ENCODE measurements at regions of chr3 and their contacts with region 1.

Region 1: GRCh38 chr3:42502429-42503250 is at the start of gene VIPR1:
- DNase-seq: peak; percentile 90 to 97 (median 92)
- ATAC-seq: peak; percentile 97
- H3K4me3 ChIP-seq: peak within 1 kb of the TSS; percentile 59 to 95
- H3K4me3 Mint-ChIP-seq: peak within 1 kb of the TSS; percentile 95
- H3K27ac ChIP-seq: peak within 1 kb of the TSS; percentile 12 to 62
- H3K27ac Mint-ChIP-seq: peak within 1 kb of the TSS; percentile 91
- H3K4me1 ChIP-seq: peaks cover 52% of the 10 kb centered on the region
- H3K4me1 Mint-ChIP-seq: peaks cover 49% of the 10 kb centered on the region
- H3K27me3 ChIP-seq: peaks cover 3 to 7% of the 10 kb centered on the region in 2 experiments
- H3K27me3 Mint-ChIP-seq: peaks cover 16% of the 10 kb centered on the region
- CTCF ChIP-seq: no peak
- total RNA-seq, gene VIPR1: 31.2 to 34.3 TPM

Region 2: GRCh38 chr3:41961750-41962679 is 540.6 kb before region 1 on chr3 and contains the start of gene ULK4:
- CTCF ChIA-PET with region 1: no interaction called
- POLR2A ChIA-PET with region 1: interaction called, 3 read pairs
- intact Hi-C with region 1: loop called (anchors 2 to 5 kb)
- DNase-seq: peak; percentile 89 to 99 (median 95)
- ATAC-seq: peak; percentile 84
- H3K4me3 ChIP-seq: peak within 1 kb of the TSS; percentile 84 to 99
- H3K4me3 Mint-ChIP-seq: peak within 1 kb of the TSS; percentile 100
- H3K27ac ChIP-seq: peak within 1 kb of the TSS; percentile 85 to 96
- H3K27ac Mint-ChIP-seq: peak within 1 kb of the TSS; percentile 99
- H3K4me1 ChIP-seq: peaks cover 15% of the 10 kb centered on the region
- H3K4me1 Mint-ChIP-seq: peaks cover 24% of the 10 kb centered on the region
- H3K27me3 ChIP-seq: no peaks in the 10 kb centered on the region
- H3K27me3 Mint-ChIP-seq: no peaks in the 10 kb centered on the region
- CTCF ChIP-seq: no peak
- total RNA-seq, gene ULK4: 11.9 to 15.1 TPM

Region 3: DNA sequence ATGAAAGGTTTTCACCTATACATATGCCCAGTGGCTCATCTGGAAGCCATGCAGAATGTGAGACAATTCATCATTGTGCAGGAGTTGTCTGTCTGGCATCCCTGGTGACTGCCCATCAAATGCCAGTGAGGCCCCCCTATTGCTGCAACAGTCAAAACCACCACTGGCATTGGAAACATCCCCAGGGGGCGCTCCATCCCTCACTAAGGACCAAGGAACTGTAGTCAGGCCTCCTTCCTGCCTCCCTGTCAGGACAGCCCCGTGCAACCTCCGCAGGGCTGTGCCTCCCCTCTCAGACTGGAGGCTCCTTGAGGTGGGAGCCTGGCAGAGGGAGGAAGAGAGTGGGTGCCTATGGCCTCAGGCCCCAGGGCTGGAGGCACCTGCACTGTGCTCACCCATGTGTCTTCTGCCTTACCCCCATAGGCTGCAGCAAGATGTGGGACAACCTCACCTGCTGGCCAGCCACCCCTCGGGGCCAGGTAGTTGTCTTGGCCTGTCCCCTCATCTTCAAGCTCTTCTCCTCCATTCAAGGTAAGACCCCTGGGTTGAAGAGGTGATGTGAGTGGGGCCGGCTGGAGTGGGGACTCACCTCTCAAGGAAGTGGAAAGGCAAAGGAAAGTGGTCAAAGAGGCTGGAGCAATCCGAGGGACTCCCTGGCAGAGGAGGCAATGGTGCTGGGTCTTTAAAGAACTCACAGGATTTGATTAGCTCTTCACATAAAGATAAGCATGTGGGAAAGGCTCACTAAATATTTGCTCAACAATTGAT is 16.3 kb after region 1 on chr3:
- CTCF ChIA-PET with region 1: interaction called, 17 read pairs
- POLR2A ChIA-PET with region 1: interaction called, 4 read pairs
- intact Hi-C with region 1: no loop called
- DNase-seq: peak; percentile 10 to 75 (median 48)
- ATAC-seq: peak; percentile 55
- H3K4me3 ChIP-seq: no peak overlapping the region
- H3K4me3 Mint-ChIP-seq: no peak overlapping the region
- H3K27ac ChIP-seq: no peak overlapping the region
- H3K27ac Mint-ChIP-seq: peak overlapping the region; percentile 76
- H3K4me1 ChIP-seq: peaks cover 29% of the 10 kb centered on the region
- H3K4me1 Mint-ChIP-seq: peaks cover 30% of the 10 kb centered on the region
- H3K27me3 ChIP-seq: no peaks in the 10 kb centered on the region
- H3K27me3 Mint-ChIP-seq: no peaks in the 10 kb centered on the region
- CTCF ChIP-seq: peak; percentile 34

Region 4: DNA sequence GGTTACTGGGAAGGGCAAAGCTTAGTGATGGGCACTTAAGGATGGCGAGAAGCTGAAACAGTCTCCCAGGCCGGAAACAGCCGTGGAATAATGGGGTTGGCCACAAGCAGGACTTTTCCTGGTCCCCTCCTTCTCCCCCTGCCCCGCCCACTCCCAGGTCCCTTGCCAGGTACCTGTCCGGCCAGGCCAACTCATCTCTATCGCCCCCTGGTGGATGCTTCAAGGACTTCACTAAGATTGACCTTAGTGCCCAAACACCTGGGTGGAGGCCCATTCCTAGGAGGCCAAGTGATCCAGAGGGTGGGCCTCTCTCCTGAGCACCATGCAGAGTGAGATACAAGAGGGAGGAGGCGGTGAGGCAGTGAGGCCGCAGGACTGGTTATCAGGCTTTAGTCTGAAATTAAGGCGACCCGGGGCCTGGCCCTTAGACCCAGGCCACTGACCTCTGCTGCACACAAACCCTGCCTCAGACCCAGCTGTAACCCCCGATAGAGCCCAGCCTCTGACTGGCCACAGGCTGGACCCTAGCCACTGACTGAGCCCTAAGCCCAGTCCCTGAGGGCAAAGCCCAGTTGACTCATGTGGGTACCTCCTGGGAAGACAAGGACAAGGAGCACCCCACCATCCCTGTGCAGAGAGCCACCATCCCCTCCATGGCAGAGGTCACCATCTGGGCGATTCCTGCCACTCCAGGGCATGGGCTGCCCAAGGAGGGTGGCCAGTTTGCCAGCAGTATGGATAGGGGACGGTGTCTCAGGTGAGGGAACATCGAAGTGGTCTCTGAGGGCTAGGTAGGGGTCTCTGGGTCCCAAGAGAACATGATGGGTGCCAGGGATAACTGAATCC is 37.5 kb after region 1 on chr3:
- CTCF ChIA-PET with region 1: interaction called, 556 read pairs
- POLR2A ChIA-PET with region 1: interaction called, 20 read pairs
- intact Hi-C with region 1: loop called (anchors 1 kb)
- DNase-seq: peak; percentile 32 to 80 (median 70)
- ATAC-seq: peak; percentile 64
- H3K4me3 ChIP-seq: no peak overlapping the region
- H3K4me3 Mint-ChIP-seq: no peak overlapping the region
- H3K27ac ChIP-seq: no peak overlapping the region
- H3K27ac Mint-ChIP-seq: no peak overlapping the region
- H3K4me1 ChIP-seq: peaks cover 20% of the 10 kb centered on the region
- H3K4me1 Mint-ChIP-seq: peaks cover 21% of the 10 kb centered on the region
- H3K27me3 ChIP-seq: no peaks in the 10 kb centered on the region
- H3K27me3 Mint-ChIP-seq: no peaks in the 10 kb centered on the region
- CTCF ChIP-seq: peak; percentile 67

Region 5: DNA sequence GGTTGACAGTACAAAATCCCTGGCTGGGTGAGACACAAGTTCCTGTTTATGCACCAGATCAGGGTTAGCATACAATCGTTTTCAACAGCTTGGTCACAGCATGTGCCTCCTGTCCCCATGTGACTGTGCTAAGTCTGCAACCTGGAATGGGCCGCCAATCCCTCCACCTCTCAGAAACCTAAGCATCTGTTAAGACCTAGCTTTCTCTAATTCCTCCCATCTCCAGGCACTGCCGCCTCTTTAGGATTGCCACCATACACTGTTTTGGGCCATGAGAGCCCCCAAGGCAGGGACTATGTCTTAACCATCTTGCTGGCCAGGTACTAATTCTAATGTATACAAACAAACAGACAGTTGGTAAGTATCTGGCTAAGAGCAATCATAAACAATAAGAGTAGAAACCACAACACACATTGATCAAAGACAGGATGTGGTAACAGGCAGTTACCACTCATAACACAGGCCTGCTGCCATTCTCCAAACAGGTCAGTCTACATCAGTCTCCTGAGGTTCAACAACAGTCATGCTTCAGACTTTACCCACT is 53.5 kb after region 1 on chr3:
- CTCF ChIA-PET with region 1: interaction called, 556 read pairs
- POLR2A ChIA-PET with region 1: interaction called, 12 read pairs
- intact Hi-C with region 1: loop called in 1 of 2 experiments (anchors 1 kb)
- DNase-seq: peak in 8 of 9 experiments; percentile 18 to 82 (median 58)
- ATAC-seq: peak; percentile 83
- H3K4me3 ChIP-seq: no peak overlapping the region
- H3K4me3 Mint-ChIP-seq: peak overlapping the region; percentile 59
- H3K27ac ChIP-seq: peak overlapping the region; percentile 42 to 55
- H3K27ac Mint-ChIP-seq: peak overlapping the region; percentile 97
- H3K4me1 ChIP-seq: peaks cover 21% of the 10 kb centered on the region
- H3K4me1 Mint-ChIP-seq: peaks cover 29% of the 10 kb centered on the region
- H3K27me3 ChIP-seq: no peaks in the 10 kb centered on the region
- H3K27me3 Mint-ChIP-seq: no peaks in the 10 kb centered on the region
- CTCF ChIP-seq: no peak

Region 6: DNA sequence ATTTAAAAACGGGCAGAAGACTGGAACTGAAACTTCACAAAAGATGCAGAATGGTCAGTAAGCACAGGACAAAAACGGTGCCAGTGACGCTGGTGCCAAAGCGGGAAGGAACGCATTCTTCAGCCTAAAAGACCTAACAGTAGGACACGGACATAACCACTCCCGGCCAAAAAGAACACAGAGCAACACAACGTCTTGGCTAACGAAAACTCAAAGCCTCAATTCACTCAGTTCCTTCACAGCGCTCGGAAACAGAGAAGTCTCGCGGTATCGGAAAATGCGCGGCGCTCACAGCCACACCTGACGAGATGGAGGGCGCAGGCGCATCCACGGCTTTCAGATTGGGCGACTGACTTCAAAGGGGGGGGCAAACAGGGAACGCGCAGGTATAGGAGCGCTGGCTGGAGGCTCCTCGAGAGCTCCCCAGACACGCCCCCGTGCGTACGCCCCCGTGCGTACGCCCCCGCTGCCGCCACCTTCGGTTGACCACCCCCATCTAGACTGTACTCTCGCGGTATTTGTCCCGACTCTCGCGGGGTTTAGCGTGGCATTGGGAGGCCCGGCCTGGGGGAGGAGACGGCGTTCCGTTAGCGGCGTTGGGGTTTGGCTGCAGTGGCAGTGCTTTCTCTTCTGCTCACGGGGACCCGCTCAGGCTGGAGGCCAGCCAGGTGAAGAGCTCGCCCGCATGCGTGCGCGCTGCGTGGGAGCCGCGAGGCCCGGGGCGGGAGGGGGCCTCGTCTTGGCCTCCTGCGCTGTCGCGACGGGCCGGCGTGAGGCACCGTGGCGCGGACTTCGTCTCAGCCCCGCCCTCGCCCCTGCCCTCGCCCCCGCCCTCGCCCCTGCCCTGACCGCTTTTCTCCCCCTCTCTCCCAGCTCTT is 97.7 kb after region 1 on chr3 and contains the start of gene NKTR:
- CTCF ChIA-PET with region 1: interaction called, 3 read pairs
- POLR2A ChIA-PET with region 1: interaction called, 4 read pairs
- intact Hi-C with region 1: loop called (anchors 5 kb)
- DNase-seq: peak; percentile 99 to 100 (median 100)
- ATAC-seq: peak; percentile 94
- H3K4me3 ChIP-seq: peak within 1 kb of the TSS; percentile 56 to 96
- H3K4me3 Mint-ChIP-seq: peak within 1 kb of the TSS; percentile 93
- H3K27ac ChIP-seq: peak within 1 kb of the TSS; percentile 69 to 81
- H3K27ac Mint-ChIP-seq: peak within 1 kb of the TSS; percentile 97
- H3K4me1 ChIP-seq: peaks cover 22% of the 10 kb centered on the region
- H3K4me1 Mint-ChIP-seq: peaks cover 39% of the 10 kb centered on the region
- H3K27me3 ChIP-seq: no peaks in the 10 kb centered on the region
- H3K27me3 Mint-ChIP-seq: no peaks in the 10 kb centered on the region
- CTCF ChIP-seq: no peak
- total RNA-seq, gene NKTR: 190 to 204 TPM

Region 7: DNA sequence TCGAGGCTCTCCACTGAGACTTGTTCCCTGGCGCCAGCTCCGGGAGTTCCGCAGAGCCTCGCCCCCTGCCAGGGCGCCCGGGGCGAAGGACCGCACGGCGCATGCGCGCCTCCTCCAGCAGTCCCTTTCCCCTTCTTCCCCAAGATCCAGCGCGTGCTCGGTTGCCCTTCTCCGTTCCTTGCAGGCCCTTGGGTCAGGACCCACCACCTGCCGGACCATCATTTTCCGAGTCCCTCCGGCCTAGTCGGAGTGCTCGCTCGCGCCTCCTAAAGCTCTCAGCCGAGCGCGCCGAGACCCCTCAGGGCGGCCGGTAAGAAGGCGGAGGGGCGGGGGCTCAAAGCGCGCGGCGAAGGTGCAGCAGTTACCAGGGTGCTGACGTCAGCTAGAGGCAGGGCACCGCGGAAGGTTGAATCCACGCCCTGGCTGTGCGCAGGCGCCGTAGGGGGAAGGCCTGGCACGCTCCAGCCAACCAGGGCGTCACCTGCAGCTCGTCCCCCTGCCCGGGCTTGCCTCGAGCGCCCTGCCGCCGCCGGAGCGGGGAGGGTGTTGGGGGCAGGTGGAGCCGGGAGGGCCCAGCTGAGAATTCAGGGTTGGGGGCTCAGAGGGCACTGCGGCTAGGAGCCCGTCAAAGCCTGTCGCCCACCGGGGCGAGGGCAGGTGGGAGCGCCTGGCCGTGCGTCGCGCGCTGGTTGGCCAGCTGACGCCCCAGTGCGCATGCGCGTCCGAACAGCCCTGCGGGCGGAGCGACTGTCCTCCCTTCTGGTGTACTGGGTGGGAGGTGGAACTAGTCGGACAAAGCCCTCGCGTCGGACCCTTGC is 1835.6 kb after region 1 on chr3 and contains the start of gene TCAIM:
- CTCF ChIA-PET with region 1: no interaction called
- POLR2A ChIA-PET with region 1: no interaction called
- intact Hi-C with region 1: loop called in 1 of 2 experiments (anchors 5 kb)
- DNase-seq: peak; percentile 97 to 100 (median 99)
- ATAC-seq: peak; percentile 92
- H3K4me3 ChIP-seq: peak within 1 kb of the TSS; percentile 76 to 91
- H3K4me3 Mint-ChIP-seq: peak within 1 kb of the TSS; percentile 93
- H3K27ac ChIP-seq: peak within 1 kb of the TSS; percentile 88 to 93
- H3K27ac Mint-ChIP-seq: peak within 1 kb of the TSS; percentile 97
- H3K4me1 ChIP-seq: peaks cover 15% of the 10 kb centered on the region
- H3K4me1 Mint-ChIP-seq: peaks cover 32% of the 10 kb centered on the region
- H3K27me3 ChIP-seq: no peaks in the 10 kb centered on the region
- H3K27me3 Mint-ChIP-seq: peaks cover 6% of the 10 kb centered on the region
- CTCF ChIP-seq: no peak
- total RNA-seq, gene TCAIM: 3.1 to 3.7 TPM

Measured in CD8-positive, alpha-beta T cell (primary cell).